ENCODE measurements at regions of chr7 and their contacts with region 1.

Region 1: DNA sequence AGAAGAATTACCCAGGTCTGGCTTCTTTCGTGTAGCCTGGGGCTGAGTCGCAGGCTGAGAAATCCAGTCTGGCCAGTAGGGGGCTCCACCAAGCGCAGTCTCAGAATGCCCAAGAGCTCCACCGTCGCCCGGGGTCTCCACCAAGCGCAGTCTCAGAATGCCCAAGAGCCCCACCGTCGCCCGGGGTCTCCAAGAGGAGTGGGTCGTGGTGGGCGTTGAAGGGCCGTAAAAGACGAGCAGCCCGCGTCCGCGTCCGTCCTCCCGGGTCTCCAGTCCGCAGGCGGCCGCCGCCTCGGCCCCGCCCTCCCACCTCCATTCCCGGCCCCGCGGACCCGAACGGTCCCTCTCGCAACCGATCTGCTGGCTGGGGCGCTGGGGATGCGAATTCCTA is 895 bp upstream of the ZYX start:
- DNase-seq: no peak
- H3K4me3 ChIP-seq: peak overlapping the region; percentile 93 to 99
- H3K27ac ChIP-seq: peak overlapping the region; percentile 94
- H3K4me1 ChIP-seq: peaks cover 54% of the 10 kb centered on the region
- H3K27me3 ChIP-seq: no peaks in the 10 kb centered on the region
- CTCF ChIP-seq: peak; percentile 84 to 87 (median 84)
- POLR2A ChIP-seq: peak in 1 of 2 donors; percentile 25

Region 2: DNA sequence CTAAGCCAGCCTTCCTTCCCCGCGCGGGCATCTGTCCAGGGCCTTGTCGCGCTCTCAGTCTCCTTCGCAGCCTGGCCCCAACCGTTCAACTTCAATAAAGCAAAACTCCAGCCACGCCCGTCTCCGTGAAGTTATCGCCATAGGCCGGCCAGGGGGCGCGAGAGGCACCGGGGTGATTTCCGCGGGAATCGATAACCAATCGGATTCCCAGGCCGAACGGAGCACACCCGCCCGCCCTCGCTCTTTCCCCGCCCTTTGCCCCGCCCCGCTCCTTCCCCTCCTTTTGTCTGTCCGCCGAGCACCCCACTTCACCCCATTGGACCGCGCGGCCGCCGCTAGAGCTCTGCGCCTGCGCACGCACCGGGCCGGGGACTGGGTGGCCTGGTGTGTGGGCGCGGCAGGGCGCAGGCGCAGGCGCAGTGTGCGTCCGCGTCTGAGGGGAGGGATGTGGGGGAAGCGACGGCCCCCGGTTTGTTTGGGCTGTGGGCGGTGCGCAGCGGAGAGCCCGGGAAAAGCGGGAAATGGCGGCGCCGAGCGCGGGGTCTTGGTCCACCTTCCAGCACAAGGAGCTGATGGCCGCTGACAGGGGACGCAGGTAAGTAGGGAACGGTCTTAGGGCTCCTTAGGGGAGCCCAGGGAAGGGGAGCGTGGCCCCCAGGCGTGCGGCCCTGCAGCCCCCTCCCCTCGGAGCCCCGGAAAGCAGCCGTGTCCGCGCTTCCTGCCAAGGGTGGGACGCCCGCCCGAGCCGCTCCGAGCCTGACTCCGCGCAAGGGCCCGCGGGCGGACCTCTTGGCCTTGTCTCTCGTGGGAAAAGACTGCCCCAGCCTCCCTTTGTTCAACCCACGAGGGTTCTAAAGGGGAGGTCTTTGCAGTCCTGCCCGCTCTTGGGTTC is 92.1 kb before region 1 on chr7 and contains the start of gene CASP2:
- intact Hi-C with region 1: loop called (anchors 5 kb)
- DNase-seq: peak in 1 of 2 donors; percentile 95
- H3K4me3 ChIP-seq: peak within 1 kb of the TSS; percentile 85 to 86
- H3K27ac ChIP-seq: peak within 1 kb of the TSS; percentile 81
- H3K4me1 ChIP-seq: peaks cover 31% of the 10 kb centered on the region
- H3K27me3 ChIP-seq: no peaks in the 10 kb centered on the region
- CTCF ChIP-seq: no peak
- POLR2A ChIP-seq: peak in 1 of 2 donors; percentile 36
- total RNA-seq, gene CASP2: 24.8 TPM

Region 3: DNA sequence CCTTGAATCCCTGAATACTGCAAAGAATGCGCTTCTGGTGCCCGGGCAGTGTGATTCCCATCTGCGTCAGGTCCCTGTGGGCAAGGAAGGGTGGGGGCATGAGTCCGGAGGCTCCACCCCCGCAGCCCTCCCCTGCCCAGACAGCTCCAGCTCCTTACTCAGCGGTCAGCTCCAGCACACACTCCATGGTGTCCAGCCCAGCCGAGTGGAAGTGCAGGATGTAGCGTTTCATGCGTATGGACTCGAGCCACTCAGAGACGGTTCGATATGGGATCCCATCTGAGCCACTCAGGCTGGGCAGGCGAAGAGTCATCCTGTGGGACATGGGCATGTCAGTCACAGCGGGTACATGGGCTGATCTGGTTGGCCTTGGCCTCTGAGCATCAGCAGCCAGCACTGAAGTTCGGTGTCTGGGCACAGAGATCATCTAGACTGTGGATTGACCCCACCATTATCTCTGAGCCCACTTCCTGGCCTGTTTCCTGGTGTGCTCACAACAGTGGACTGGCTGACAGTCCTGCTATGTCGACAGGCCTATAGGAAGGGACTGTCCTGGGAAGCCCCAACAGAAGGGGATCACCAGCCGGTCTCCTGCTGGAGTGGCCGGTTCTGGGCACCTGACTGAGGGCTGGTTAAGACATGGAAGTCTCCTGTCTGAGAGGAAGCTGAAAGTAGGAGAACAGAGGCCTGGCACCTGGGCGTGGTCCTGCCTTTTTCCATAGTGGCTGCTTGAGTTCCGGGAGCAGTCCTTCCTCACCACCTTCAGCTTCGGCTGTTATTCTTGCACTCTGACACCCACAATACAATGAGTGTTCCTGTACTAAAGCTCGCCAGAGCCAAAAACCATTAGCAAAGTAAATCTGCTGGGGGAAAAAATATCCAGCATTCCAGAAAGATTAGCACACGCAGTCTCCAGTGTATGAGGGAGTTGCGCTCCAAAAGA is 11.5 kb after region 1 on chr7:
- intact Hi-C with region 1: loop called (anchors 1 kb)
- DNase-seq: no peak
- H3K4me3 ChIP-seq: peak overlapping the region; percentile 3 to 14
- H3K27ac ChIP-seq: peak overlapping the region; percentile 86
- H3K4me1 ChIP-seq: peaks cover 37% of the 10 kb centered on the region
- H3K27me3 ChIP-seq: no peaks in the 10 kb centered on the region
- CTCF ChIP-seq: no peak
- POLR2A ChIP-seq: no peak